ENCODE measurements at regions of chr6 and their contacts with region 1.

Region 1: GRCh38 chr6:117985916-117986315 is 78.9 kb downstream of the SLC35F1 start:
- DNase-seq: no peak
- ATAC-seq: no peak
- H3K4me3 ChIP-seq: no peak overlapping the region
- H3K27ac ChIP-seq: no peak overlapping the region
- H3K4me1 ChIP-seq: no peaks in the 10 kb centered on the region
- H3K27me3 ChIP-seq: no peaks in the 10 kb centered on the region
- CTCF ChIP-seq: no peak
- POLR2A ChIP-seq: no peak

Region 2: GRCh38 chr6:118252474-118252873 is 266.6 kb after region 1 on chr6:
- in situ Hi-C with region 1: loop called in 1 of 4 experiments (anchors 10 kb)
- intact Hi-C with region 1: no loop called
- DNase-seq: no peak
- ATAC-seq: no peak
- H3K4me3 ChIP-seq: no peak overlapping the region
- H3K27ac ChIP-seq: no peak overlapping the region
- H3K4me1 ChIP-seq: no peaks in the 10 kb centered on the region
- H3K27me3 ChIP-seq: no peaks in the 10 kb centered on the region
- CTCF ChIP-seq: no peak
- POLR2A ChIP-seq: no peak

Measured in gastrocnemius medialis (tissue), 4 donors.